ENCODE measurements at regions of chr9 and their contacts with region 1.

Region 1: GRCh38 chr9:15873569-15874177 is 320.8 kb downstream of the CCDC171 start:
- DNase-seq: peak; percentile 74
- ATAC-seq: peak; percentile 66
- H3K4me3 ChIP-seq: no peak overlapping the region
- H3K27ac ChIP-seq: peak overlapping the region; percentile 78
- H3K4me1 ChIP-seq: peaks cover 18% of the 10 kb centered on the region
- H3K27me3 ChIP-seq: no peaks in the 10 kb centered on the region
- CTCF ChIP-seq: peak; percentile 72

Region 2: GRCh38 chr9:15578714-15579113 is 295.0 kb before region 1 on chr9:
- CTCF ChIA-PET with region 1: no interaction called
- POLR2A ChIA-PET with region 1: no interaction called
- intact Hi-C with region 1: no loop called
- DNase-seq: no peak
- ATAC-seq: no peak
- H3K4me3 ChIP-seq: no peak overlapping the region
- H3K27ac ChIP-seq: no peak overlapping the region
- H3K4me1 ChIP-seq: no peaks in the 10 kb centered on the region
- H3K27me3 ChIP-seq: no peaks in the 10 kb centered on the region
- CTCF ChIP-seq: no peak

Region 3: GRCh38 chr9:15785584-15785983 is 88.1 kb before region 1 on chr9:
- CTCF ChIA-PET with region 1: no interaction called
- POLR2A ChIA-PET with region 1: no interaction called
- intact Hi-C with region 1: no loop called
- DNase-seq: no peak
- ATAC-seq: no peak
- H3K4me3 ChIP-seq: no peak overlapping the region
- H3K27ac ChIP-seq: no peak overlapping the region
- H3K4me1 ChIP-seq: no peaks in the 10 kb centered on the region
- H3K27me3 ChIP-seq: no peaks in the 10 kb centered on the region
- CTCF ChIP-seq: no peak

Region 4: DNA sequence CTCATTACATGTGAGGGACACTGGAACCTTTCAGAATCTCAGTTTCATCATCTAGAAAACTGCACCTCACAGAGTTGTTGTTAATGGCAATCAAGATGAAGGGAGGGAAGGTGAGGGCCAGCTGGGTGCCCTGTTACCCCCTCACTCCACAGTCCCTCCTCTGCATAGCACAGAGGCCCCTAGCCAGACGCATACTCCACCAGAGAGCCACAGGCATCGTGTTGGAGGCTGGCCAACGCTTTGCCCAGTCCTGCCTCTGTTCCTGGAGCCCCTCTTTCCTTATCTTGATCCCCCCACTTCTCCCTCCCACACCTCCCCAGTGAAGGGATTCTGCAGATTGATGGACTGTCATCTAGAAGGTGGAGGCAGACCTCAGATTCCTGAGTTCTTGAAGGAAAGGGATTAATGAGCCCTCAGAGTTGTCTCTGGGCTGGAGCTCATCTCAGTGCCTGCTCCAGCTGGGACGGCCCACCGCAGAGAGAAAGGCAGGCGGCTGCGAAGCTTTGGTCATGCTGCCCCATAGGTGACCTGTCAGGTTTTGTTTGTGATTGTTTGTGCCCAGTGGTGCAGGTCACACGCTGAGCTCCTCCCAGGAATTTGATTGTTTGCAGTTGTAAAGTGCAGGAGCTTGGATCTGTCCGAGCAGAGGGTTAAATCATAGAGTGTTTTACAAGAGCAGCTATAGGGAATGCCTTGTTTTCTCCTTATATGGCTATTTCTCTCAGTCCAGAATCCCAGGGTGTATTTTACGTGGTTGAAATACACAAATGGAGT is 166.5 kb after region 1 on chr9:
- CTCF ChIA-PET with region 1: no interaction called
- POLR2A ChIA-PET with region 1: no interaction called
- intact Hi-C with region 1: loop called (anchors 5 kb)
- DNase-seq: peak; percentile 70
- ATAC-seq: peak; percentile 83
- H3K4me3 ChIP-seq: no peak overlapping the region
- H3K27ac ChIP-seq: peak overlapping the region; percentile 62
- H3K4me1 ChIP-seq: peaks cover 28% of the 10 kb centered on the region
- H3K27me3 ChIP-seq: no peaks in the 10 kb centered on the region
- CTCF ChIP-seq: no peak

Region 5: GRCh38 chr9:16133556-16134227 is 260.0 kb after region 1 on chr9:
- CTCF ChIA-PET with region 1: no interaction called
- POLR2A ChIA-PET with region 1: no interaction called
- intact Hi-C with region 1: loop called (anchors 1 kb)
- DNase-seq: peak; percentile 88
- ATAC-seq: peak; percentile 86
- H3K4me3 ChIP-seq: peak overlapping the region; percentile 36; the same call in 1 of the 2 replicates
- H3K27ac ChIP-seq: peak overlapping the region; percentile 97
- H3K4me1 ChIP-seq: peaks cover 27% of the 10 kb centered on the region
- H3K27me3 ChIP-seq: no peaks in the 10 kb centered on the region
- CTCF ChIP-seq: peak; percentile 81

Region 6: DNA sequence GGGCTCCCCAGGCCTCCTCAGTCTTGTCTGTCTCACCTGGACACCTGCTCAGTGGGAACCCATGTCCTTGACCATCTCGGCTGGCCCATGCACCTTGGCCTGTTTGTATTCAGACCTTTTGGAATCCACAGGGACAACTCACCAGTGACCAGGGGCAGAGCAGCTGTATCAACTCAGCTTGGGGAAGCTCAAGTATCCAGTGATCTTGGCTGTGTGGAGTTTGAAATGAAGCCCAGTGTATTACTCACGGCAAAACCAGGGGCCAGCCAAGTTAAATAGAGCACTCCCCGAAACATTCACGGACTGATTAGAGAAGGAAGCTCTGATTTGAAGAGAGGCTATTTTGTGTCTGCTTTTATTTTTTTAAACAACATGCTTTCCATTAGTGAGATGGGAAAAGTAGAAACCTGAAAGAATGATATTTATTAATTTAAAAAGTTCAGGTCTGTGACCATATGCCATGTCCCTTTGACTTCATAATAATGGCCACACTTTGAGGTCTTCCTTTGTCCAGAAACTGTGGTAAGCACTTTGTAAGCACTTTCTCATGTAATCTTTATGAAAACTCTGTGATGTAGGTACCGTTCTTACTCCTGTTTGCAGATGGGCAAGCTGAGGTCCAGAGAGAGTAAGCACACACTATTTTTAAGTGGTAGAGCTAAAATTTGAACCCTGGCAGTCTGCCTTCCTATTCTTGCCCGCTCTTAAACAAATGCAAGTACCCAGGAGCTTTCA is 340.3 kb after region 1 on chr9:
- CTCF ChIA-PET with region 1: no interaction called
- POLR2A ChIA-PET with region 1: no interaction called
- intact Hi-C with region 1: loop called (anchors 1 kb)
- DNase-seq: peak; percentile 93
- ATAC-seq: peak; percentile 98
- H3K4me3 ChIP-seq: no peak overlapping the region
- H3K27ac ChIP-seq: peak overlapping the region; percentile 88
- H3K4me1 ChIP-seq: peaks cover 24% of the 10 kb centered on the region
- H3K27me3 ChIP-seq: no peaks in the 10 kb centered on the region
- CTCF ChIP-seq: no peak

Region 7: DNA sequence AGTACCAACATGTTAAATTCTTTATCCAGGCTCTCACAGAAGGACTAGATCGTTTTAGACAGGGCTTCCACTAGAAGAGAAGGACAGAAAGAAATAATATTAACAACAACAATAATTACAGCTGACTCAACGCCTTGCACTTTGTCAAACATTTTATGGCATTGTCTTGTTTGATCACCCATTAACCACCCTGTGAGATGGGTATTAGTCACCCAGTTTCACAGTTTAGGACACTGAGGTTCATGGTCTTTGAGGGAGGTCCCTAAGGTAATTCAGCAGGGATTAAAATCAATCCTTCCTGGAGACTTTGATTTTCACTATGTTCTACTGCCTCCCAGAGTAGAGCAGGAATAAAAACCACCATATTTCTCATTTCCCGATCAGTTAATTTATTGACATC is 1048.2 kb after region 1 on chr9:
- CTCF ChIA-PET with region 1: no interaction called
- POLR2A ChIA-PET with region 1: no interaction called
- intact Hi-C with region 1: loop called (anchors 10 kb)
- DNase-seq: peak; percentile 77
- ATAC-seq: peak; percentile 95
- H3K4me3 ChIP-seq: no peak overlapping the region
- H3K27ac ChIP-seq: peak overlapping the region; percentile 52
- H3K4me1 ChIP-seq: peaks cover 21% of the 10 kb centered on the region
- H3K27me3 ChIP-seq: no peaks in the 10 kb centered on the region
- CTCF ChIP-seq: peak; percentile 59